ENCODE measurements at regions of chr13 and their contacts with region 1.

Region 1: GRCh38 chr13:40653527-40654318 is 12.7 kb downstream of the FOXO1 start:
- DNase-seq: no peak
- ATAC-seq: peak in 3 of 4 donors; percentile 12 to 20 (median 19)
- H3K4me3 ChIP-seq: no peak overlapping the region
- H3K27ac ChIP-seq: no peak overlapping the region
- H3K4me1 ChIP-seq: peaks cover 11 to 24% (median 14%) of the 10 kb centered on the region in 3 donors
- H3K27me3 ChIP-seq: no peaks in the 10 kb centered on the region
- CTCF ChIP-seq: no peak

Region 2: DNA sequence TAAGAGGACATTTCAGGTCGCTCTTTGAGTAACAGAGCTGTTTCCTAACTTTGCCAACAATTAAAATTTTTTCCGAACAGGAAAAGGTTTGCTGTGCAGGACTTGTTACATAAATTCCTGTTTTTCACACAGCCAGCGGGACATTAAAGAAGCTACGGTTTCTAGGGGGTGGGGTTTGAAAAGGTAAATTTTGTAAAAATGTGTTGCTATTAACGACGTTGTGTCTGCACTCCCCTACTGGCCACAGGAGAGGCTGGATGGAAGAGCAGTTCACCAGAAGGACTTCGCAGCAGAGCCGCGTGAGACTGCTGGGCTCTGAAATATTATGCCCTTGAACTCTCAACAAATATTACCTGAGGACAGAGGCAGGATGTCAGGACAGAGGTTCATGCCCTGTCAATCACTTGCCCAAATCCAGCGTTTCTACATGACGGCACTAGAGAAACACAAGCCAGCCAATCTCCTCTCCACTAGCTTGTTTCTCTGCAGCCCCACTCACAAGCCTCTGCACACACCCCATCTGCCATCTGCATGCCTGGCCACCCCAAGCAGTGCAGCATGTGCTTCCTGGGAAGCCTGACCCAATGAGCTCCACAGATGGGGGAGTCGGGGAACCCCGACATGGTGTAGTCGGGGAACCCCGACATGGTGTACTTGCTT is 89.3 kb before region 1 on chr13:
- intact Hi-C with region 1: loop called in 1 of 3 experiments (anchors 10 kb)
- DNase-seq: no peak
- ATAC-seq: peak; percentile 33 to 67 (median 56)
- H3K4me3 ChIP-seq: no peak overlapping the region
- H3K27ac ChIP-seq: peak overlapping the region in 2 of 4 donors; percentile 4 to 34
- H3K4me1 ChIP-seq: peaks cover 4 to 41% (median 35%) of the 10 kb centered on the region in 3 donors
- H3K27me3 ChIP-seq: no peaks in the 10 kb centered on the region
- CTCF ChIP-seq: no peak

Region 3: DNA sequence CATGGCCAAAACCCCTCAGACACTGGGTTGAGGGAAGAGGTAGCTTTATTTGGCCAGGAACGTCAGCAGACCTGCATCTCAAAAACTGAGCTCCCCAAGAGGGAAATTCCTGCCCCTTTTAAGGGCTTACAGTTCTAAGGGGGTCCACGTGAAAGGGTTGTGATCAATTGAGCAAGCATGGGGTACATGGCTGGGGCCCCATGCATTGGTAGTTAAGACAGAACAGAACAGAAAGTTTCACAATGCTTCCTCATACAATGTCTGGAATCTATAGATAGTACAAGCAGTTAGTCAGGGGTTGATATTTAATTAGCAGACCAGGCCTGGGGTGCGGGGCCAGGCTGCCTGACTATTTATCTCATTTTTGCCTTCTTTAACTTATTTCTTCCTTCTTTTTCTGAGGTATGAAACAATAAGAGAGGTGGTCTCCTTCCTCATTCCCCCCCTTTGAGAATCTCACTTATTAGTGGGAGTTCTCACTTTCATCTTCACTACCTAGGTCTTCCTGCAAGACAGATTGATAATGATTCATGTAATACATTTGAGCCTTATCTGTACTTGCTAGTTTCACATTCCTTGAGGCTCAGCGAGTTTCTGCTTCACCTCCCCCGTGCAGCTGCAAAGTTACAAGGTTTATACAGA is 220.5 kb after region 1 on chr13:
- intact Hi-C with region 1: no loop called
- DNase-seq: no peak
- ATAC-seq: no peak
- H3K4me3 ChIP-seq: no peak overlapping the region
- H3K27ac ChIP-seq: no peak overlapping the region
- H3K4me1 ChIP-seq: no peaks in the 10 kb centered on the region
- H3K27me3 ChIP-seq: no peaks in the 10 kb centered on the region
- CTCF ChIP-seq: no peak